Right cardiac atrium (tissue), 5 donors: ENCODE measurements at regions of chr17 and their contacts with region 1.

Region 1: GRCh38 chr17:76155988-76156661 is 15.1 kb upstream of the FOXJ1 start:
- DNase-seq: no peak
- ATAC-seq: peak in 1 of 2 donors; percentile 30
- H3K4me3 ChIP-seq: no peak overlapping the region
- H3K27ac ChIP-seq: no peak overlapping the region
- H3K4me1 ChIP-seq: no peaks in the 10 kb centered on the region
- H3K27me3 ChIP-seq: no peaks in the 10 kb centered on the region

Region 2: DNA sequence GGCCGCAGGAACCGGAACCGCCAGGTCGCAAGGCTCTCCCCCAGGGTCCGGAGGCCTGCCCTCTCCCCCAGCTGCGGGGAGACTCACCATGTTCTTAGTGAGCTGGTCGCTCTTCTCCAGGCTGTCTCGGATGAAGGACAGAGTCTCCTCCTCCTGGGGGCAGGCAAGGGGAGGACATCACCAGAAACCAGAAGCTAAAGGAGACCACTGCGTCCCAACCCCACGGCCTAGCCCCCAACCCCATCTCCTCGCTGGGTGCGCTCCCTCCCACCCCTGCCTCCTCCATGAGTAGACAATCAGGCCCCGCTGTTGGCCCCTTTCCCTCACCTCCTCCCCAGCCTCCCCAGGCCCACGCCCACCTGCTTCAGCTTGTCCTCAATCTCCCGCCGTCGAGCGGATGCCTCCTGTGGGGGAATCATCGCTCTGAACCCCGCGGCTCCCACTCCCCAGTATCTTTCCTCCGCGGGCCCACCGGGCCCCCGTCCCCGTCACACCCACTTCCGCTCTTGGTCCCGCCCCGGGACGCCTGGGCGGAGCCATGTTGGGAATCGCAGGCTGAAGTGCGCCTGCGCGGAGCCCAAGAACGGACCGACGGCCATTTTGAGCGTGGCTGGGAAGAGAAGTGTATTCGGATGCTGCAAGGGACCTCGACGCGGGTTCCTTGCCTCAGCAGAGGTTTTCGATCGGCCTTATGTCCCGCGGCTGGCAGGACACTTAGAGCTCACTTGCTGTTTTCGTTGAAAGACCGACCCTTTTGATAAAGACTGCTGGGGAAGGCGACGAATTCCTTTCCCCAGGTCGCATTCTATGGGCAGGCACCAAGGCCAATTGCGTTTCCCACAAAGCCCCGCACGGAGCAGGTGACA is 52.6 kb before region 1 on chr17 and contains the start of gene EXOC7:
- intact Hi-C with region 1: no loop called
- DNase-seq: peak; percentile 91 to 97 (median 96)
- ATAC-seq: peak; percentile 97
- H3K4me3 ChIP-seq: peak within 1 kb of the TSS; percentile 74
- H3K27ac ChIP-seq: peak within 1 kb of the TSS; percentile 76
- H3K4me1 ChIP-seq: no peaks in the 10 kb centered on the region
- H3K27me3 ChIP-seq: no peaks in the 10 kb centered on the region
- total RNA-seq, gene EXOC7: 74.5 to 93.5 (median 84.8) TPM

Region 3: GRCh38 chr17:76166906-76167305 is 10.8 kb after region 1 on chr17:
- intact Hi-C with region 1: loop called in 1 of 4 experiments (anchors 1 kb)
- DNase-seq: no peak
- ATAC-seq: no peak
- H3K4me3 ChIP-seq: no peak overlapping the region
- H3K27ac ChIP-seq: no peak overlapping the region
- H3K4me1 ChIP-seq: no peaks in the 10 kb centered on the region
- H3K27me3 ChIP-seq: no peaks in the 10 kb centered on the region

Region 4: GRCh38 chr17:76191896-76192295 is 35.8 kb after region 1 on chr17:
- intact Hi-C with region 1: no loop called
- DNase-seq: no peak
- ATAC-seq: no peak
- H3K4me3 ChIP-seq: no peak overlapping the region
- H3K27ac ChIP-seq: no peak overlapping the region
- H3K4me1 ChIP-seq: peaks cover 1% of the 10 kb centered on the region
- H3K27me3 ChIP-seq: no peaks in the 10 kb centered on the region